Thyroid gland (tissue), 4 donors: ENCODE measurements at regions of chr5 and their contacts with region 1.

Region 1: GRCh38 chr5:103041071-103041676 is 78.8 kb downstream of the GIN1 start:
- DNase-seq: no peak
- H3K4me3 ChIP-seq: no peak overlapping the region
- H3K27ac ChIP-seq: no peak overlapping the region
- H3K4me1 ChIP-seq: no peaks in the 10 kb centered on the region
- H3K27me3 ChIP-seq: no peaks in the 10 kb centered on the region
- CTCF ChIP-seq: peak; percentile 11 to 67 (median 45)
- POLR2A ChIP-seq: no peak

Region 2: GRCh38 chr5:102681407-102681983 is 359.7 kb before region 1 on chr5:
- intact Hi-C with region 1: loop called (anchors 10 kb)
- DNase-seq: peak; percentile 71 to 75
- H3K4me3 ChIP-seq: no peak overlapping the region
- H3K27ac ChIP-seq: no peak overlapping the region
- H3K4me1 ChIP-seq: no peaks in the 10 kb centered on the region
- H3K27me3 ChIP-seq: no peaks in the 10 kb centered on the region
- CTCF ChIP-seq: peak; percentile 33 to 80 (median 71)
- POLR2A ChIP-seq: no peak